ENCODE measurements at regions of chr7 and their contacts with region 1.

Region 1: DNA sequence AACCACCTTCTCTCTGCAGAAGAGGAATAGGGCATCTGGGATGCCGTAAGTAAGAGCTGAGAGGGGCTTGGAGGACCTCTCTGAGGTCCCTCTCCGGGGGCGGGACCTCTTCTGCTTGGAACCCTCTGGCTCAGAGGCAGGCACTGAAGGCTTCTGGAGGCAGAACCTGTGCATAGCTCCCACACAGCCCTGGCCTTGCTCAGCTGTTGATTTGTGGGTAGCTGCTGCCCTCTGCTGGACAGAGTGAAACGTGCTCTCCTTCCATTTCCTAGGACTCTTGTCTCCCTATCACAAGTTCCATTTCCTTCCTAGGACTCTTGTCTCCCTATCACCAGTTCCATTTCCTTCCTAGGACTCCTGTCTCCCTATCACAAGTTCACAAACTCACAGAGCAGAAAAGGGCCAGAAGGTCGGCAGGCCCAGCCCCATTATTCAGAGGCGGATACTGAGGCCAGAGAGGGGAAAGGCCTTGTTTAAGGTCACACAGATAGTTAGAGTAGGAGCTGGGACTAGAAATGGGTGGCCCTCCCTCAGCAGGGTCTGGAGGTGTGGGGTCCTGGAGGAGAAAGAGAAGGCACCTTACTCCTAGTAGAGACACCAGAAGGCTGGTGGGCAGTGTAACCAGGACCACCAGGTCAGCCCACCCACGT is 30.3 kb upstream of the GARS1 start:
- DNase-seq: peak; percentile 78 to 98 (median 90)

Region 2: GRCh38 chr7:29955799-29956486 is 608.4 kb before region 1 on chr7:
- intact Hi-C with region 1: loop called (anchors 10 kb)
- DNase-seq: no peak

Region 3: DNA sequence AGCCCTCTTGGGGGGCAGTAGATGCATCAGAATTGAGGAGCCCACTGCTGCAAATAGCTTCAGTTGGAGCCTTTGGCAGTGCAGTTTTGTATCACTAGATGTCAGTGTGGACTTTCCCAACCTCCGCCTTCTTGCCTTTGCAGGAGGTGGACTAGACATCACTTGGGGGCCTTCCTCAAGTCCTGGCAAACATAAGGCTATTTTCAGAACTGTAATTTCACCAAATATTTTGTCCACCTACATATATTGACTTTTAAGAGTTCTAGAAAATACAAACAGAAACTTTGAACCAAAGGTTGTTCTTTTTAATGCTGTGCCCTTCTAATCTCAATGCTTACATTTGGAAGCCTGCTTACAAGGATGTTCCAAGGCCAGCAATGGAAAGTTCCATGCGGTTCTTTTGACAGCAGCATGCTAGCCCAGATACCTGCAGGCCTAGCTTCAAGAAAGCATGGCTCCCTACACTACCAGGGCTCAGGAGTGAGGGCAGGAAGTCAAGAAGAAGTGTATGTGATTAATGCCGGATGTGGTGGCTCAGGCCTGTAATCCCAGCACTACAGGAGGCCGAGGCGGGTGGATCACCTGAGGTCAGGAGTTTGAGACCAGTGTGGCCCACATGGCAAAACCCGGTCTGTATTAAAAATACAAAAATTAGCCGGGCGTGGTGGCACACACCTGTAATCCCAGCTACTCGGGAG is 288.0 kb before region 1 on chr7:
- intact Hi-C with region 1: loop called (anchors 1 kb)
- DNase-seq: peak in 7 of 10 donors; percentile 56 to 90 (median 59)

Region 4: DNA sequence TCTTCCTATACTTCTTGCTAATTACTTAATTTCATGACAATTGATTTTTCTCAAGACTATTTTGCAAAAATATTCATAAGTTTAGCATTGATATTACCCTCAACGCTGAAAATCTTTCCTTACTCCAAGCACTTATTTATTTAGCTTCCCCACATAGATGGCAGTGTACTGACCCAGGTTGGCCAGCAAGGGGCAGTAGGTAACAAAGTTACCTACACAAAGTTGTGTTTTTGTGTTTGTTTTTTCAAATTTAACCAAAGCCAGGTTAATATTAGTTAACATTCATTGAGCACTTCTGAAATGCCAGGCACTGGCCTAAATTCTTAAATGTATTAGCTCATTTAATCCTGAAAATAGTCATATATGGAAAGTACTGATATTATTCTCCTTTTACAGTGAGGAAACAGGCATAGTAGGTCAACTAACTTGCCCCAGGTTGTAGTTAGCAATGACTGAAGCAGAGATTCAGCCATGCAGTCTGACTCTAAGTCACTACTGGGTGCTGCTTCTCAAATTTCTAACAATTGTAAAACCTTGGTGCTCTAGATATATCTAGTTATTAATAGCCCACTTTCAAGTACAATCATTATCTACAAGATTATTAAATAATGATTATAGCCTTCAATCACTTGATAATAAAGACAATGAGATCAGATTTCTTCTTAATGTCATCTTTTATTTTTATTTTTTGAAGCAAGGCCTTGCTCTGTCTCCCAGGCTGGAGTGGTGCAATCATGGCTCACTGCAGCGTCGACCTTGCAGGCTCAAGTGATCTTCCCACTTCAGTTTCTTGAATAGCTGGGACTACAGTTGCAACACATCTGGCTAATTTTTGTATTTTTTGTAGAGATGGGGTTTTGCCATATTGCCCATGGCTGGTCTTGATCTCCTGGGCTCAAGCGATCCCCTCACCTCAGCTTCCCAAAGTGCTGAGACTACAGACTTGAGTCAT is 54.0 kb before region 1 on chr7:
- intact Hi-C with region 1: loop called (anchors 1 kb)
- DNase-seq: peak in 3 of 10 donors; percentile 13 to 71 (median 15)

Region 5: DNA sequence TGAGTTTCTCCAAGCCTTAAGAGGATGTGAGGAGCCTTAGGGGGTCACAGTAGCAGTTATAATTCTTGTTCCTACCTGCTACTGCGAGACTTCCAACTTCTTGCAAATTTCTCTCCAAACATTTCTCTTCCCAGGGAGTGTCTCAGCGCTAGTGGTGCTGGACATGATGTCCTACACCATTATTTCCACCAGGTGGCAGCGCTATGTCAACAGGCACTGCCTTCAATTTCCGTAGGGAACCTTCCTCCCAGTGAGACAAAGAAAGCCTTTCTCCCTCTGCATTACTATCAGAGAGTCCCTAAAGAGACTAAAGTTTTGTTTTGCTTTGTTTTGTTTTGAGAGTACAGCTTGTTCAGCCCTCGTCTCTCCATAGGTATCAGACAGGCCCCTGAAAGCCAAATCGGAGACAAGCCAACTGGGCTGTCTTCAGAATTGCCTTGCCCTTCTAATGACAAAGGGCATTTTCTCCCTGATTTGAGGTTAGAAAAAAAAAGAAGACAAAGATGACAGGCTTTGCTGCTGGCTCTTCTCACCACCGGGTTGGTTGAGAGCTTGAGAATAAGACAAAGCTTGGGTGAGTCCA is 15.5 kb before region 1 on chr7:
- intact Hi-C with region 1: loop called (anchors 1 kb)
- DNase-seq: peak; percentile 41 to 95 (median 76)

Measured in posterior cingulate gyrus (tissue), 11 donors.